K562 (cell line): ENCODE measurements at regions of chr9 and their contacts with region 1.

Region 1: DNA sequence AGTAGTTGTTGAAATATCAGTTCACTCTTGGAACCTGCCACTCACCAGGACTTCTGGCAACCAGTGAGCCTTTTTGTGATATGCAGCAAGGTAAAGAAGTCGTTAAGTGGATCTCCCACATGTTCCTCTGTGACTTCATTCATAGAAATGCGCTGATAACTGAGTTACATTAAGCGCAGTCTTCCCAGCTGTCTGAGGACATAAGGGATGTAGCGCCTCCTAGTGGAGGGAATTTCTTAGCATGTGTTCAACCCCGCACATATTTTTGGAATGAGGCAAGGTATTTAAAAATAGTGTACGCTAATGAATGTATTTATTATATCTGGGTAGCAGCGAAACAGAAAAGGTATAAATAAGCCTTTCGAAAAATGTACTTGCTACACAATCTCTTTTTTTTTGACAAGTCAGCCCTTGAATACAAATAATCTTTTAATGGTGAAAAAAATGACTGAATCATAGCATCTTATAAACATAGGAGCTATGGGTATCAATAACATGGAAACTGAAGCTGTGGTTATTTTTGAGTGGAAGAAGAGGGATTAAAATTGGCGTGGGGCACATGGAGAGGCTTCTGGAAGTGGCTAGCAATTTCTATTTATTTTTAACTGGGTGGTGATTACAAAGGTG is 38.0 kb downstream of the PALM2AKAP2 start:
- DNase-seq: peak; percentile 65 to 82 (median 74)
- ATAC-seq: peak; percentile 94
- H3K4me3 ChIP-seq: no peak overlapping the region
- H3K27ac ChIP-seq: no peak overlapping the region
- H3K4me1 ChIP-seq: no peaks in the 10 kb centered on the region
- H3K27me3 ChIP-seq: no peaks in the 10 kb centered on the region
- CTCF ChIP-seq: peak; percentile 70 to 88 (median 81)
- EP300 ChIP-seq: no peak
- POLR2A ChIP-seq: no peak
- RAD21 ChIP-seq: peak; percentile 36 to 63

Region 2: GRCh38 chr9:109574068-109574882 is 243.7 kb before region 1 on chr9:
- CTCF ChIA-PET with region 1: interaction called, 10 read pairs
- POLR2A ChIA-PET with region 1: no interaction called
- in situ Hi-C with region 1: no loop called
- intact Hi-C with region 1: loop called (anchors 5 kb)
- DNase-seq: peak; percentile 29 to 54 (median 36)
- ATAC-seq: peak; percentile 90
- H3K4me3 ChIP-seq: no peak overlapping the region
- H3K27ac ChIP-seq: no peak overlapping the region
- H3K4me1 ChIP-seq: no peaks in the 10 kb centered on the region
- H3K27me3 ChIP-seq: no peaks in the 10 kb centered on the region
- CTCF ChIP-seq: peak; percentile 50 to 75 (median 60); a peak in 5 of 6 replicates
- EP300 ChIP-seq: no peak
- POLR2A ChIP-seq: no peak
- RAD21 ChIP-seq: peak; percentile 52 to 75

Region 3: GRCh38 chr9:109579191-109579948 is 238.6 kb before region 1 on chr9:
- CTCF ChIA-PET with region 1: interaction called, 10 read pairs
- POLR2A ChIA-PET with region 1: no interaction called
- in situ Hi-C with region 1: no loop called
- intact Hi-C with region 1: loop called (anchors 5 kb)
- DNase-seq: no peak
- ATAC-seq: no peak
- H3K4me3 ChIP-seq: no peak overlapping the region
- H3K27ac ChIP-seq: no peak overlapping the region
- H3K4me1 ChIP-seq: no peaks in the 10 kb centered on the region
- H3K27me3 ChIP-seq: no peaks in the 10 kb centered on the region; a peak in 1 of 5 replicates
- CTCF ChIP-seq: no peak
- EP300 ChIP-seq: no peak
- POLR2A ChIP-seq: no peak
- RAD21 ChIP-seq: no peak